H1 (cell line): ENCODE measurements at regions of chr13 and their contacts with region 1.

Region 1: DNA sequence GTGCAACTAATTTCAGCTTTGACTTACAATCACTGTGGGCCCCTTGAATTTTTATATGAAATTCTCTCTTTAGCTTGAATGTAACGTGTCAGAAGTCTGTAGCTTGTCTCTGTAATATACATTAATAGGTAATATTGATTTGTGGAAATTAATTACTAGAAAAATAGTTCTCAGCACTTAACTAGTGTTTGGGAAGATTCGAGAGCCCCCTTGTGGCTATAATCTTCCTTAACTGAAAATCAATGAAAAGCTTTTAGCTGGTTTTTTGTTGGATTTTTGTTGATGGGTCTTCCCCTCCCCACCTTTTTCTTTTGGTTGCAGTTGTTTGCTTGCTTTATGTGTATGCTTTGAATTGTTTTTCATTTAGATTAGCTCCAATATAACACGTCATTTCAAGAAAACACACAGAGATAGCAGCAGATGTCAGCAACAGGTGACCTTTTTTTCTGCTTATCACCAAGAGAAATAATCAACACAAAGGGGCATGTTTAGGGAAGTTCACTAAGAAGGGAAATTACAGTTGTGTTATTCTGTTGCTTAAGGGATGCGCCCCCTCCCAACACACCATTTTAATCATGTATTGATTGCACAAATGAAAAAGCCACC is 176.8 kb downstream of the OXGR1 start:
- DNase-seq: no peak
- H3K4me3 ChIP-seq: no peak overlapping the region
- H3K27ac ChIP-seq: no peak overlapping the region
- H3K4me1 ChIP-seq: peaks cover 0 to 8% (median 4%) of the 10 kb centered on the region in 4 experiments; a peak in 2 of 7 replicates
- H3K27me3 ChIP-seq: no peaks in the 10 kb centered on the region
- CTCF ChIP-seq: peak in 2 of 3 experiments; percentile 36 to 43; a peak in 2 of 4 replicates
- EP300 ChIP-seq: no peak
- POLR2A ChIP-seq: no peak
- RAD21 ChIP-seq: peak; percentile 64 to 72

Region 2: GRCh38 chr13:96020155-96020575 is 797.3 kb before region 1 on chr13:
- CTCF ChIA-PET with region 1: interaction called, 12 read pairs
- POLR2A ChIA-PET with region 1: no interaction called
- DNase-seq: no peak
- H3K4me3 ChIP-seq: no peak overlapping the region
- H3K27ac ChIP-seq: no peak overlapping the region
- H3K4me1 ChIP-seq: peaks cover 0 to 2% (median under 1%) of the 10 kb centered on the region in 4 experiments; a peak in 3 of 7 replicates
- H3K27me3 ChIP-seq: no peaks in the 10 kb centered on the region
- CTCF ChIP-seq: peak in 2 of 3 experiments; percentile 47 to 61; a peak in 3 of 4 replicates
- EP300 ChIP-seq: no peak
- POLR2A ChIP-seq: no peak
- RAD21 ChIP-seq: peak; percentile 82 to 83

Region 3: GRCh38 chr13:96141027-96141426 is 676.4 kb before region 1 on chr13:
- CTCF ChIA-PET with region 1: interaction called, 10 read pairs
- POLR2A ChIA-PET with region 1: no interaction called
- DNase-seq: no peak
- H3K4me3 ChIP-seq: no peak overlapping the region
- H3K27ac ChIP-seq: no peak overlapping the region
- H3K4me1 ChIP-seq: no peaks in the 10 kb centered on the region
- H3K27me3 ChIP-seq: no peaks in the 10 kb centered on the region
- CTCF ChIP-seq: peak in 2 of 3 experiments; percentile 32 to 44; a peak in 2 of 4 replicates
- EP300 ChIP-seq: no peak
- POLR2A ChIP-seq: no peak
- RAD21 ChIP-seq: peak; percentile 52 to 57

Region 4: GRCh38 chr13:96797136-96797535 is 20.3 kb before region 1 on chr13:
- CTCF ChIA-PET with region 1: interaction called, 10 read pairs
- POLR2A ChIA-PET with region 1: no interaction called
- DNase-seq: no peak
- H3K4me3 ChIP-seq: no peak overlapping the region
- H3K27ac ChIP-seq: no peak overlapping the region
- H3K4me1 ChIP-seq: no peaks in the 10 kb centered on the region
- H3K27me3 ChIP-seq: no peaks in the 10 kb centered on the region; a peak in 1 of 7 replicates
- CTCF ChIP-seq: no peak
- EP300 ChIP-seq: no peak
- POLR2A ChIP-seq: no peak
- RAD21 ChIP-seq: no peak

Region 5: DNA sequence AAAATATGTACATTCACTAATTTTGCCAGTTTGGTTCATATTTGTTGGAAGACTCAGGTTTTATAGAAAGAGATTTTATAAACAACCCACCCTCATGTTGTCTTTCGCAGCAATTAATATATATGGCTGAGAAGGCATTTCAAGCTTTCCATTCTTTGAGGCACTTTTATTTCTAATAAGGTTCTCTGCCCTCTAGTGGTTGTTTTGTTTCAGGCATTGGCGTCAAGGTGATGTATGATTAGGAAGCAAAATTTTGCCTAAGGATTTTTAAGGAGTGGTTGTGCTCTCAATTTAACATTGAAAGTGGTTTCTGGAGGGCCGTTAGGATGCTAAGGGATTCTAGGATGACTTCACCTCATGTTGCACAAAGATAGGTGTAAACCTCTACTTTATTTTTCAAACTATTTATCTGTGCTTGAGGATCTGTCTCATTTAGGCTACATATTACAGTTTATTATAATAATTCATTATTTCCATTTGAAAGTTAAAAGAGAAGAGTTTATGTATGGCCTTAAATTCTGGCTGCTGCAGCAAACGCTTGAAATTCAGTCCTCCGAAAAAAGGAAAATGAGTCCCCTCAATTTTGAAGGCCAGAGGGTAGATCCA is 140.9 kb after region 1 on chr13:
- CTCF ChIA-PET with region 1: interaction called, 36 read pairs
- POLR2A ChIA-PET with region 1: no interaction called
- DNase-seq: no peak
- H3K4me3 ChIP-seq: no peak overlapping the region
- H3K27ac ChIP-seq: no peak overlapping the region
- H3K4me1 ChIP-seq: no peaks in the 10 kb centered on the region
- H3K27me3 ChIP-seq: no peaks in the 10 kb centered on the region
- CTCF ChIP-seq: peak in 2 of 3 experiments; percentile 47 to 67; a peak in 2 of 4 replicates
- EP300 ChIP-seq: no peak
- POLR2A ChIP-seq: no peak
- RAD21 ChIP-seq: peak; percentile 67